ENCODE measurements at regions of chr19 and their contacts with region 1.

Region 1: DNA sequence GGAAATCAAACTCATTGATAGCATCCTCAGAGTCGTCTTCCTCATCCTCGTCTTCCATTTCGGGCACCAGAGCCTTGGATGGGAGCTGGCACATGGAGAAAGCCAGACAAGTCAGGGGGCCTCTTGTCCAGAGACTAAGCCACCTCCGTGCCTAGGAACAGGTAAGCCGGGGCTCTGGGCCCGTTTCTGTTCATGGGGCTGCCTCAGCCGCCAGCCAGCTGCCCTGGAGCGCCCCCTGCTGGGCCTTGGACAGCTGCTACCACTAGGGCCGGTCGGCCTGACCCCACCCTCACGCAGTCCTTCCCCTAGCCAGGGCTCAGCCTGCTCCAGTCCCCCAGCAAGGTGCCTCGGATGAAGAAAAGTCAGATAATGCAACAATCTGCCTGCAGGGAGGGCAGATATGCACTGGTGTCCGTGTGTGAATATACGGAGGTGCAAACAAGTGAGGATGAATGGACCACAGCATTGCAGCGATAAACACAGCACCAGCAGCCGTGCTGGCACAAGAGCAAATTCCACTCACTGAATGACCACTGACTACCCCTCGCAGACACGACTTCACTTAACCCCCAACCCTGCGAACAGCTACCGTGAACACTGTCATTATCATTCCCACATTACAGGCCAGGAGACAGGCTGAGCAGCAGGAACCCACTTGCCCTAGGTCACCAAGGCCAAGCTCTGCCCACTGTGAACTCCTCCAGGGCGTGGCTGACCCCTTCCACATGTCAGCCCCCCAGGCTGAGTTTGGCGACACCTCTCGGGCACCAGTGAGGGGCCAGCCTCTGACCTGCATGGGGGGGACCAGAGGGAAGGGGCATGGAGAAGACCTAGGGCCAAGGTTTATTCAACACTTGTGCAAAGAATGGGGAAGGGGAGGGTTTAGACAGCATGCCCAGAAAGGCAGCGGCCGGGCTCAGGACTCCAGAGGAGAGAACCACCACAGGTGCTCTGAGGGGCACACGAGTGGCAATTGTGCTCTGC is 12.1 kb upstream of the PRKD2 start:
- DNase-seq: peak; percentile 84
- H3K4me3 Mint-ChIP-seq: no peak overlapping the region
- H3K27ac Mint-ChIP-seq: peak overlapping the region; percentile 62
- H3K4me1 Mint-ChIP-seq: peaks cover 26% of the 10 kb centered on the region
- H3K27me3 Mint-ChIP-seq: no peaks in the 10 kb centered on the region

Region 2: DNA sequence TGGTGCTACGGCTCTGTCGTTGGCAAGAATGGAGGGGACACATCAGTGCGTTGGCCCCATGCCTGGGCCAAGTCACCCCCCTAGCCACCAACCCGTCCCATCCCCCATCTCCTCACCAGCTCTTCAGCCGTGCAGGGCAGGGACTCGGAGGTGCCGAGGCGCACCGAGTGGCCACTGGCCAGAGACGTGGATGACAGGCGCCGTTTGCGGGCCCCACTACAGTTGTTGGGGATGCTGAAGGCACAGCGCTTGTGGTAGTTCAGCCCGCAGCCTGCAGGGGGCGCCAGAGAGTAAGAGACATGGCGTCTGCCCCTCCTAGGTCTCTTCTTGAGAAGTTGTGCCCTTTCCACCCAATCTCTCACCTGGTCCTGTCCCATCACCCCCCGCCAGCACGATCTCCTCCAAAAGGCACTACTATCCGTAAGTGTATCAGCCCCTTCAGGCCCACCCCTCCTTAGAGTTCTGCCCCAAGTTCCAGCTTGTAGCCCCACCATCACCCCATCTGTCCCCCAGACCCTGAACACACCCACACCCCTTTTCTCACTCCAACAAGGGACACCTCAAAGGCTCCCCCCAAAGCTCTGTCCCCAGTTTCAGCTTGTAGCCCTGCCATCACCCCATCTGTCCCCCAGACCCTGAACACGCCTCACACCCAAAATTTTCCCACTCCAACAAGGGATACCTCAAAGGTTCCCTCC is 24.5 kb before region 1 on chr19:
- CTCF ChIA-PET with region 1: interaction called, 36 read pairs
- POLR2A ChIA-PET with region 1: no interaction called
- DNase-seq: peak; percentile 89
- H3K4me3 Mint-ChIP-seq: no peak overlapping the region
- H3K27ac Mint-ChIP-seq: peak overlapping the region; percentile 78
- H3K4me1 Mint-ChIP-seq: peaks cover 10% of the 10 kb centered on the region
- H3K27me3 Mint-ChIP-seq: no peaks in the 10 kb centered on the region

Region 3: GRCh38 chr19:46717034-46717723 is 11.8 kb before region 1 on chr19 and contains the start of gene PRKD2:
- CTCF ChIA-PET with region 1: interaction called, 20 read pairs
- POLR2A ChIA-PET with region 1: interaction called, 3 read pairs
- DNase-seq: peak; percentile 91
- H3K4me3 Mint-ChIP-seq: peak within 1 kb of the TSS; percentile 94
- H3K27ac Mint-ChIP-seq: peak within 1 kb of the TSS; percentile 96
- H3K4me1 Mint-ChIP-seq: peaks cover 44% of the 10 kb centered on the region
- H3K27me3 Mint-ChIP-seq: no peaks in the 10 kb centered on the region
- total RNA-seq, gene PRKD2: 175 to 178 TPM

Region 4: DNA sequence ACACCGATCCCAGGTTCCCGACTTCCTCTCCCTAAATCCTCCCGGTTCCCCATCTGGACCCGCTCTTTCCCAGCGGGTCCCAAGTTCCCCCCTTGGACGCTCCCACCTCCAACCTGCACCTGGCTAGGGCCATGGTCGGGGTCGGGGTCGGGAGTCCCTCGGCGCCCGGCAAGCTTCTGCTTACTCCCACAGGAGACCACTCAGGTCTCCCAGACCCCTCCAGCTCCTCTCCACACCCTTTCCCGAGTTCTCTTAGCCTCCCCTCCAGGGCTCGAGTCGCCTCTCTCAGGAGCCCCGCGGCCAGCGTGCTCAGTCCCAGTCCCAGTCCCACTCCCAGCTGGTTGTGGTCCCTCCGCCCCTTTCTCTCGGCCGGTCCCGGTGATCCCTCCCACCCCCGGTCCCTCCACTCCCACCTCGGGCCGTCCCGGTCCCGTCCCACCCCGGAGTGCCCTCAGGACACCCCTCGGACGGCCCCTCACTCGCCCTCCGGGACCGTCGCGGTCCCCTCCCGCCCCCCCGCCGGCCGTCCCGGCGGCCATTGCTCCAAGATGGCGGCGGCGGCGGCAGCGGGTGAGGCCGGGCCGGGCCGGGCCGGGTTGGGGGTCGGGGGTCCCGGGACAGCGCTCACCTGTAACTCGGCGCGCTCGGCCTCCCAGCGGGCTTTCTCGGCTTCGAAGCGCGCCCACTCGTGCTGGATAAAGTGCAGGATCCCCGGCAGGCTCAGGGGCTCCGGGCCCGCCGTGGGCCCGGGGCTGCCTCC is 16.7 kb after region 1 on chr19 and contains the start of gene FKRP:
- CTCF ChIA-PET with region 1: interaction called, 10 read pairs
- POLR2A ChIA-PET with region 1: no interaction called
- DNase-seq: peak; percentile 32
- H3K4me3 Mint-ChIP-seq: peak within 1 kb of the TSS; percentile 93
- H3K27ac Mint-ChIP-seq: peak within 1 kb of the TSS; percentile 91
- H3K4me1 Mint-ChIP-seq: peaks cover 55% of the 10 kb centered on the region
- H3K27me3 Mint-ChIP-seq: no peaks in the 10 kb centered on the region
- total RNA-seq, gene FKRP: 16.9 to 20.5 TPM

Measured in activated CD4-positive, alpha-beta T cell treated with anti-CD3 and anti-CD28 coated beads, Interleukin-2, amount 10 ng/mL, durations not matched to agents 7 days and 5 days (primary cell).